ENCODE measurements at regions of chr5 and their contacts with region 1.

Region 1: GRCh38 chr5:159324102-159324760 is 6.1 kb downstream of the IL12B start:
- DNase-seq: no peak
- ATAC-seq: no peak
- H3K4me3 ChIP-seq: no peak overlapping the region
- H3K27ac ChIP-seq: no peak overlapping the region
- H3K4me1 ChIP-seq: no peaks in the 10 kb centered on the region
- H3K27me3 ChIP-seq: peaks cover 0 to 7% (median under 1%) of the 10 kb centered on the region in 3 donors
- CTCF ChIP-seq: no peak
- POLR2A ChIP-seq: no peak

Region 2: DNA sequence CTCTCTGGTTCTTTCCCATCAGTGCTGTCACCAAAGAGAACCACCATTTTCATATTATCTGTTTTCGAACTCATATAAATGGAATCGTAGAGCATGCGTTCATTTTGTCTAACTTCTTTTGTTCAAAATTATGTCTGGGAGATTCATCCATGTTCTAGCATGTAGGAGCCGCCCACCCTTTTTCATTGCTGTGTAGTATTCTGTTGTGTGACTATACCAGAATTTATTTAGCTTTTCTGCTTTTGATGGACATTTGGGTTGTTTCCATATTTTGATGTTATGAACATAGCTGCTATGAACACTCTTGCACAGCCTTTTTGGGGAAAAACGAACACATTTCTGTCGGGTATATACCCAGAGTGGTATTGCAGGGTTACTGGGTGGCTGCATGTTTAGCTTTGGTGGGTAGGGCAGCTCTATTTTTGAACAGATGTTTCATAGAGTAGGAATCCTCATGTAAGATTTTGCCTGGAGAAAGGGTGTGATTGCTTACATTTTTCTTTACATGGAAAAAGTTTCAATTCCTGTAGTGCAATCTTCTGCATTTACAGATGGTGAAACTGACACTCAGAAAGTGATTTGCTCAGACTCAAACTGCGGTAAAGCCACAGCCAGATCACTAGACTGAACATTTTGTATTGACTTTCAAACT is 106.3 kb after region 1 on chr5:
- in situ Hi-C with region 1: loop called in 1 of 4 experiments (anchors 10 kb)
- intact Hi-C with region 1: no loop called
- DNase-seq: no peak
- ATAC-seq: no peak
- H3K4me3 ChIP-seq: no peak overlapping the region
- H3K27ac ChIP-seq: no peak overlapping the region
- H3K4me1 ChIP-seq: no peaks in the 10 kb centered on the region
- H3K27me3 ChIP-seq: no peaks in the 10 kb centered on the region
- CTCF ChIP-seq: no peak
- POLR2A ChIP-seq: no peak

Measured in gastrocnemius medialis (tissue), 4 donors.